ENCODE measurements at regions of chr1 and their contacts with region 1.

Region 1: DNA sequence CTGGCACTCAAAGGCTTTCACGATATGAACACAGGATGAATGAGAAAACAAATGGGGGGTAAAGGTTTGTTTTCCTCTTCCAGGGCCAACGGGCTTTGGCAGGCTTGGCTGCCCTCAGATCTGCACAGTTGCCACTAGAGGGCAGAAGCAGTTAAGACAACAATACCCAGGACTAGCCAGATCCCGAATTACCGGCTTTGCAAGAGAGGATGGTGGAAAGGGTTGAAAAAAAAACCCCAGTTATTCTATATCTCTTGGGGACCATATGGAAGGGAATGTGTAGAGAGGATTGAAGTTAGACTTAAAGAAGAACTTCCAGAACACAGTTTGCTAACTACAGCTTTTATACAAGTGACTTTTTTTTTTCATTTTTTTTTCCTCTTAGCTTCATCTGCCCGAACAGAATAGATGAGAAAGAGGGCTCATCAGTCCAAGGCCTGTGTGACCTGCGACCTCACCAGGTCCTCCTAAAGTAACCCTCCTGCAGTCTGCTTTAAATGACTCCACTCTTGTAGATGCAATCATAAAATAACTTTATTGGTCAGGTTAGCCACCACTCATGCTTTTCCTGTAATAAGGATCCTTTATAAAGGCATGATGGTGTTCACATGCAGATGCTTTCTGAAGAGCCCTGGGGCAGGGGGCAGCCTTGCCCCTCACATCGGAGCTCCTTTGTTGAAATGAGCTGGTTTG is 10.7 kb downstream of the FMOD start:
- DNase-seq: peak; percentile 69
- ATAC-seq: peak; percentile 85
- H3K4me3 ChIP-seq: no peak overlapping the region
- H3K27ac ChIP-seq: no peak overlapping the region
- H3K4me1 ChIP-seq: peaks cover 6% of the 10 kb centered on the region; the same call in 1 of the 2 replicates
- H3K27me3 ChIP-seq: peaks cover 0 to 21% of the 10 kb centered on the region in 2 experiments; a peak in 2 of 5 replicates
- CTCF ChIP-seq: peak; percentile 86
- EP300 ChIP-seq: no peak
- POLR2A ChIP-seq: no peak
- RAD21 ChIP-seq: peak; percentile 63

Region 2: DNA sequence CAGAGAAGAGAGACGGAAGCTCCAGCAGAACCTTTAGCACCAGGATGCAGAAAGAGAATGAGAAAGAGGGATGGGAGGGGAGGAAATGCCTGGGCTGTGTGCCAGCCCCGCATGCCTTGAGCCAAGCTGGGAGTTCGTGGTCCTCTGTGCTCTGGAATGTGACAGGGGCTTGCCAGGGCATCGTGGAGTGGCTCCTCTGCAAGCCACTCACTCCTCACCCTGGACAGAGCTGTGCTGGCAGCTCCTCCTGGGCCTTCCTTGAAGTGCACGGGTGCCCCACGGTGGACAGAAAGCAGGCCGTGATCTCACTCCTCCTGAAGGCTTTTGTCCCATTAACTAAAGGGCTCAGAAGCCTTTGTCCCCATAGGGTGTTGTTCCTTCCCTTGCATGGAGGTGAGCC is 100.5 kb after region 1 on chr1:
- CTCF ChIA-PET with region 1: no interaction called
- POLR2A ChIA-PET with region 1: no interaction called
- in situ Hi-C with region 1: loop called (anchors 5 kb)
- intact Hi-C with region 1: loop called (anchors 1 kb)
- DNase-seq: no peak
- ATAC-seq: peak; percentile 77
- H3K4me3 ChIP-seq: no peak overlapping the region
- H3K27ac ChIP-seq: no peak overlapping the region
- H3K4me1 ChIP-seq: no peaks in the 10 kb centered on the region
- H3K27me3 ChIP-seq: peaks cover 2 to 12% of the 10 kb centered on the region in 2 experiments; a peak in 4 of 5 replicates
- CTCF ChIP-seq: peak; percentile 56
- EP300 ChIP-seq: no peak
- POLR2A ChIP-seq: no peak
- RAD21 ChIP-seq: no peak

Region 3: DNA sequence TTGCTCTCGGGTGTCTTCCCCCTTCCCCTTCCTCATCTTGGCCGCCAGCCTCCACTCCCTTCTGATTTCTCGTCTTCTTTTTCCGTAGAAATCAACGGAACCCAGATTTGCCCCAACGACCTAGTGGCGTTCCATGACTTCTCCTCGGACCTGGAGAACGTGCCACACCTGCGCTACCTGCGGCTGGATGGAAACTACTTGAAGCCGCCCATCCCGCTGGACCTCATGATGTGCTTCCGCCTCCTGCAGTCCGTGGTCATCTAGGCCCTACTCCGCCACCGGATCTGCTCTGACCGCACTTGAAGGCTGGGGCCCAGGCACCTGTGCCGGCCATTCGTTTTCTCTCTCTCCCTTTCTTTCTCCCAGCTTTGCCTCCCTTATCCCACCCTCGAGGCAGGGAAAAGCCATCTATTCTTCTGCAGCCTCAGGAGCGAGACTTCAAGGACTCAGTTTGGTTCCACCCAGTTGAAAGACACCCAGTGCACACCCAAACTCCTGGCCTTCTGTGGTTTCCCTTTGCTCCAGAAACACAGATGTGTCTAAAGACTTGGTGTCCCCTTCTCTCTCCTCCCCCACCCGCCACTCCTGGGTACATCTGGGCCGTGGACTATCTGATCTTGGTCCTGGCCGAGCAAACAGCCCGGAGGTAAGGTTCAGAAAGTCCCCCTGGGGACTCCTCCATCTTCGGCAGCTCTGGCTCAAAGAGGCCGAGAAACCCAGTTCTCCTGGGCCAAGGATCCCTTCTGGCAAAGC is 146.5 kb after region 1 on chr1:
- CTCF ChIA-PET with region 1: interaction called, 26 read pairs
- POLR2A ChIA-PET with region 1: no interaction called
- in situ Hi-C with region 1: loop called (anchors 5 kb)
- intact Hi-C with region 1: loop called (anchors 1 kb)
- DNase-seq: no peak
- ATAC-seq: no peak
- H3K4me3 ChIP-seq: no peak overlapping the region
- H3K27ac ChIP-seq: no peak overlapping the region
- H3K4me1 ChIP-seq: no peaks in the 10 kb centered on the region
- H3K27me3 ChIP-seq: peaks cover 2 to 23% of the 10 kb centered on the region in 2 experiments; a peak in 3 of 5 replicates
- CTCF ChIP-seq: no peak
- EP300 ChIP-seq: no peak
- POLR2A ChIP-seq: no peak
- RAD21 ChIP-seq: no peak